Activated CD4-positive, alpha-beta memory T cell treated with anti-CD3 and anti-CD28 coated beads, Interleukin-2, amount 10 ng/mL, durations not matched to agents 7 days and 5 days (primary cell): ENCODE measurements at regions of chr2 and their contacts with region 1.

Region 1: GRCh38 chr2:38720613-38721241 is 30.4 kb downstream of the SRSF7 start:
- DNase-seq: no peak
- H3K4me3 Mint-ChIP-seq: no peak overlapping the region
- H3K27ac Mint-ChIP-seq: peak overlapping the region; percentile 70
- H3K4me1 Mint-ChIP-seq: peaks cover 65% of the 10 kb centered on the region
- H3K27me3 Mint-ChIP-seq: no peaks in the 10 kb centered on the region

Region 2: GRCh38 chr2:38596229-38596628 is 124.5 kb before region 1 on chr2:
- CTCF ChIA-PET with region 1: interaction called, 86 read pairs
- POLR2A ChIA-PET with region 1: interaction called, 51 read pairs
- DNase-seq: no peak
- H3K4me3 Mint-ChIP-seq: peak overlapping the region; percentile 89
- H3K27ac Mint-ChIP-seq: peak overlapping the region; percentile 84
- H3K4me1 Mint-ChIP-seq: peaks cover 68% of the 10 kb centered on the region
- H3K27me3 Mint-ChIP-seq: no peaks in the 10 kb centered on the region

Region 3: DNA sequence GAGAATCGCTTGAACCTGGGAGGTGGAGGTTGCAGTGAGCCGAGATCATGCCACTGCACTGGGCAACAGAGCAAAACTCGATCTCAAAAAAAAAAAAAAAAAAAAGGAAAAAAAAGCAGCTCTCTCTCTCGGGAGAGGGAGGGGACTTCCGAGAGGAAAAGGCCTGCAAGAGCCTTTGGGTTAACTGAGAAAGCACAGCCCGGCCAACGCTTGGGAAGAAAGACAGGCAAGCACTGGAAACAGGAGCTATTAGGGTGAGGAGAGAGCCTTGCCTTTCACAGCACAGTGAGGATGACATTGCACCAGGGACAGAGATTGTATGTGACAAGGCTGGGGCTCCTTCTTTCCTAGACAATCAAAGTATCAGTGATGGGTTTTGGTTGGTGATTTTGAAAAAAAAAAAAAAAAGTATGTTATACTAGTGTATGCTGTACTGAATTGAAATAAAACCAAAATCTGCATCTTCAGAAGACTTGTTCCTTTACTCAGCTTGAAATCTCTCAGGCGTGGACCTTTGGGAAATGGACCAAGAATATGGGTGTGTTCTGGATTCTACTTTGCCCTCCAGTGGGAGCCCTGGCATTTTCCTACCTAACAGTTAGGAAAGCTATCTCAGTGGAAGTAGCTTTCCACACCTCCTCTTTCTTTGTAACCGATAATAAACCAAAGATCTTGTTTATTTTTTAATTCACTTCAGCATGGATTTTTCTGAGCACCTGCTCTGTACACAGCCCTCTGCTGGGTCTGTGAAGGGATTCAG is 13.8 kb after region 1 on chr2:
- CTCF ChIA-PET with region 1: no interaction called
- POLR2A ChIA-PET with region 1: no interaction called
- DNase-seq: no peak
- H3K4me3 Mint-ChIP-seq: no peak overlapping the region
- H3K27ac Mint-ChIP-seq: no peak overlapping the region
- H3K4me1 Mint-ChIP-seq: peaks cover 15% of the 10 kb centered on the region
- H3K27me3 Mint-ChIP-seq: no peaks in the 10 kb centered on the region